Activated CD4-positive, alpha-beta T cell treated with anti-CD3 and anti-CD28 coated beads for 36 hours (primary cell): ENCODE measurements at regions of chr17 and their contacts with region 1.

Region 1: DNA sequence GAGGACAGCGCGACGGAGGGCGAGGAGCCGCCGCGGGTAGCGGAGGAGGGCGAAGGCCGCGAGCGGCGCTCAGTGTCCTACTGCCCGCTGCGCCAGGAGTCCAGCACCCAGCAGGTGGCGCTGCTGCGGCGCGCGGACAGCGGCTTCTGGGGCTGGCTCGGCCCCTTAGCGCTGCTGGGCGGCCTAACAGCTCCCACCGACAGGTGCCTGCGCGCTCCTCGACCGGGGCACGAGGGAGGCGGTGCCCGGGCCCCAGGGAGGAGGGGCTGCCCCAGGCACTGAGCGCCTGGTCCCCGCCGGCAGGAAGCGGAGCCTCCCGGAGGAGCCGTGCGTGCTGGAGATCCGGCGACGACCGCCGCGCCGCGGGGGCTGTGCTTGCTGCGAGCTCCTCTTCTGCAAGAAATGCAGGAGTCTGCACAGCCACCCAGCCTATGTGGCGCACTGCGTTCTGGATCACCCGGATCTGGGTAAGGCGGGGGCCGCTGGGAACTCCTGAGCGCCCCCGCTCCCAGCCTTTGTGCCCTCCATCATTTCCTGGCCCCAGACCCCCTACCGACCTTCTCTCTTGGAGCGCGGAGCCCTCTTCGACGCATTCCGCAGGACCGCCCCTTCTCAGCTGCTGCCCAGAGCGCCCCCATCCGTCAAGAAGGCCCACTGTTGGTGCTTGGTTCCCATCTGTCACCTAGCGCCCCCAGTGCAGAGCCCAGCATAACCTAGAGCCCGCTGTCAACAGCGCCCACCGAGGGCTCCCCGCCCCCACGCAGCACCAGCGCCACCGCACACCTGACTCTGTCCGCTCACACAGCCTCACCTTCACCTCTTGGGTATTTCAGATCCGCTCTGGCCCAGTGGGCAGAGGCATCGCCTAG is 3.7 kb downstream of the C17orf50 start:
- DNase-seq: peak; percentile 93
- ATAC-seq: peak; percentile 95
- H3K4me3 Mint-ChIP-seq: peak overlapping the region; percentile 80
- H3K27ac Mint-ChIP-seq: peak overlapping the region; percentile 70
- H3K4me1 Mint-ChIP-seq: peaks cover 9% of the 10 kb centered on the region
- H3K27me3 Mint-ChIP-seq: no peaks in the 10 kb centered on the region

Region 2: DNA sequence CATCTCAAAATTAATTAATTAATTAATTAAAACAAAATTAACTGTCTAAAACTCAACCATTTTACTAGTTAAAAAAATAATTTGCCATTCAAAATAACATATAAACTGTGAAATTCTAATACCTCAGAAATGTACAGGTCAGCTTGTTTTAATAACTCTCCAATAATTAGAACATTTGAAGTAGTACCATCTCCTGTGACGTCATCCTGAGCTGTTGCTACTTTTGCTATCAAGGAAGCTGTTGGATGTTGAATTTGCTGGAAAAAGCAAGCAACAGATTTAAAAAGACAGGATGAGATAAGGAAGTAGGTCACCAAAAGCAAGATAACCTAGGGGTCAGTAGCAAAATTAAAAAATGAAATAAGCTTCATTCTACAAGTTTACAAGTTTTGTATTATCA is 805.9 kb before region 1 on chr17:
- CTCF ChIA-PET with region 1: no interaction called
- POLR2A ChIA-PET with region 1: no interaction called
- intact Hi-C with region 1: no loop called
- DNase-seq: no peak
- ATAC-seq: no peak
- H3K4me3 Mint-ChIP-seq: no peak overlapping the region
- H3K27ac Mint-ChIP-seq: no peak overlapping the region
- H3K4me1 Mint-ChIP-seq: peaks cover 18% of the 10 kb centered on the region
- H3K27me3 Mint-ChIP-seq: no peaks in the 10 kb centered on the region

Region 3: DNA sequence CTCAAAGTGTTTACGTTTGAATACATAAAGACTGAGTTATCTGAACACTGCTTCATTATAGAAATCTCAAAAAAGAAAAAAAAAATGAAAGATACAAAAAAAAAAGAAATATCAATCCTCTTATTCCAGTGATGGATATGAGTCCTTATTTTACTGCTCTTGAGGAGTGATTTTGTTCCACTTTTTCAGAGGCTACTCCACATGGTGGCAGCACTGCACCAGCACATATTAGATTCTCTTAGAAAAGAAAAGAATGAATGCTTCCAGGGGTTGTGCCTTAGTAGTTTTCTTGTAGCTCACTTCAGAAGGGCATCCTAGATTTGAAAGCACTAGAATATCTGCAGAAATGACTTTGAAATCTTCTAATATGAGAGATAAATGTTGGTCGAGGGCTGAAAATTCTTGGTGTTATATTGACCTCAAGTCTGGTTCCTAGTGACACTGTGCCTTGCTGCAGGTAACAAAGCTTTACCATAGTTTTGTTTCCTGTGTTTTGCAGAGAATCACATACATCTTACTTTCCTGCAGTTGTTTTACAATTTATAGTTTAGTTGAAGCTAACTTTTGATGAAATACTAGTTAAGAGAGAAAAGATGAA is 151.3 kb before region 1 on chr17:
- CTCF ChIA-PET with region 1: interaction called, 11 read pairs
- POLR2A ChIA-PET with region 1: no interaction called
- intact Hi-C with region 1: no loop called
- DNase-seq: peak; percentile 66
- ATAC-seq: peak; percentile 39
- H3K4me3 Mint-ChIP-seq: no peak overlapping the region
- H3K27ac Mint-ChIP-seq: no peak overlapping the region
- H3K4me1 Mint-ChIP-seq: no peaks in the 10 kb centered on the region
- H3K27me3 Mint-ChIP-seq: no peaks in the 10 kb centered on the region

Region 4: GRCh38 chr17:35774499-35774898 is 10.1 kb after region 1 on chr17:
- CTCF ChIA-PET with region 1: interaction called, 18 read pairs
- POLR2A ChIA-PET with region 1: no interaction called
- intact Hi-C with region 1: no loop called
- DNase-seq: no peak
- ATAC-seq: no peak
- H3K4me3 Mint-ChIP-seq: no peak overlapping the region
- H3K27ac Mint-ChIP-seq: no peak overlapping the region
- H3K4me1 Mint-ChIP-seq: no peaks in the 10 kb centered on the region
- H3K27me3 Mint-ChIP-seq: peaks cover 3% of the 10 kb centered on the region

Region 5: GRCh38 chr17:35786941-35787432 is 22.6 kb after region 1 on chr17:
- CTCF ChIA-PET with region 1: interaction called, 16 read pairs
- POLR2A ChIA-PET with region 1: no interaction called
- intact Hi-C with region 1: loop called in 1 of 2 experiments (anchors 2 kb)
- DNase-seq: no peak
- ATAC-seq: no peak
- H3K4me3 Mint-ChIP-seq: no peak overlapping the region
- H3K27ac Mint-ChIP-seq: no peak overlapping the region
- H3K4me1 Mint-ChIP-seq: peaks cover 17% of the 10 kb centered on the region
- H3K27me3 Mint-ChIP-seq: peaks cover under 1% of the 10 kb centered on the region

Region 6: GRCh38 chr17:35819456-35819855 is 55.1 kb after region 1 on chr17:
- CTCF ChIA-PET with region 1: interaction called, 17 read pairs
- POLR2A ChIA-PET with region 1: no interaction called
- intact Hi-C with region 1: no loop called
- DNase-seq: no peak
- ATAC-seq: no peak
- H3K4me3 Mint-ChIP-seq: no peak overlapping the region
- H3K27ac Mint-ChIP-seq: peak overlapping the region; percentile 28
- H3K4me1 Mint-ChIP-seq: peaks cover 36% of the 10 kb centered on the region
- H3K27me3 Mint-ChIP-seq: no peaks in the 10 kb centered on the region

Region 7: GRCh38 chr17:36148559-36149295 is 384.4 kb after region 1 on chr17:
- CTCF ChIA-PET with region 1: no interaction called
- POLR2A ChIA-PET with region 1: no interaction called
- intact Hi-C with region 1: no loop called
- DNase-seq: peak; percentile 80
- ATAC-seq: peak; percentile 87
- H3K4me3 Mint-ChIP-seq: no peak overlapping the region
- H3K27ac Mint-ChIP-seq: no peak overlapping the region
- H3K4me1 Mint-ChIP-seq: peaks cover 3% of the 10 kb centered on the region
- H3K27me3 Mint-ChIP-seq: peaks cover 15% of the 10 kb centered on the region